ENCODE measurements at regions of chr12 and their contacts with region 1.

Region 1: DNA sequence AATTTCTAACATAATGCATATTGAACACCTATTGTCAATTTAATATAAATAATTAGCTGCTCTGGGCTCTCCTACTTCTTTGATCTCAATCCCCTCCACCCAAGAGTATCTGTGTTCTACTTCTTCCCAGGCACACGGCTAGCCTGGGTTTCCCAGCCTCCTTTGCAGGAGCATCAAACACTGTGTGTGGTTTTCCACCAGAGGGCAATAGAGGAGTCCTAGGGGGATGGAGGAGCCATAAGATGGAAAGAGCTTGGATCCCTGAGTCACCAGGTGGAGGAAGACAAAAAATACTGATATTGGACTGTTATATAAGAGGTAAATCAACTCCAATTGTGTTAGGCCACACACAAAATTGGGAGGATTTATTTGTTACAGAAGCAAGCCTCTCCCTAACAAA is 333.7 kb downstream of the GLT1D1 start:
- DNase-seq: no peak
- ATAC-seq: no peak
- H3K4me3 ChIP-seq: no peak overlapping the region
- H3K27ac ChIP-seq: no peak overlapping the region
- H3K4me1 ChIP-seq: no peaks in the 10 kb centered on the region
- H3K27me3 ChIP-seq: peaks cover 0 to 13% (median 6%) of the 10 kb centered on the region in 7 donors
- CTCF ChIP-seq: no peak

Region 2: DNA sequence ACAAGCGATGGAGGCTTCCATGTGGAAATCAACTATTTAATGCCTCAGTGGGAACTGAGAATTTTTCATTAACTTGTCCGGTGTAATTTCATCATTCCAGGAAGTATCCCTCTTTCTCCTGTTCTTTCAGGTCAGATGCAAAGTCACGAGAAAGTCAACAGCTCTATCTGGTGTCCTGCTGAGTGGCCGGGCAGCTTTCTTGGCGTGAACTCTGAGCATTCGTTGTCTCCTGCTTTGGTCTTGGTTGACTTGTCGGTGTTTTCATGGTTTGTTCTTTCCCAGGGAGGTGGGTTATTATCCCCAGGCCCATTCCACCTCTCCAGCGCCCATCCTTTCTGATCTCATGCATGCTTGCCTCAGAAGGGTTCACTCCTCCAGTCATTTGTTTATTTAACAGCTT is 184.5 kb before region 1 on chr12:
- intact Hi-C with region 1: no loop called
- DNase-seq: no peak
- ATAC-seq: no peak
- H3K4me3 ChIP-seq: no peak overlapping the region
- H3K27ac ChIP-seq: no peak overlapping the region
- H3K4me1 ChIP-seq: no peaks in the 10 kb centered on the region
- H3K27me3 ChIP-seq: peaks cover 0 to 5% (median 0%) of the 10 kb centered on the region in 7 donors
- CTCF ChIP-seq: no peak

Region 3: DNA sequence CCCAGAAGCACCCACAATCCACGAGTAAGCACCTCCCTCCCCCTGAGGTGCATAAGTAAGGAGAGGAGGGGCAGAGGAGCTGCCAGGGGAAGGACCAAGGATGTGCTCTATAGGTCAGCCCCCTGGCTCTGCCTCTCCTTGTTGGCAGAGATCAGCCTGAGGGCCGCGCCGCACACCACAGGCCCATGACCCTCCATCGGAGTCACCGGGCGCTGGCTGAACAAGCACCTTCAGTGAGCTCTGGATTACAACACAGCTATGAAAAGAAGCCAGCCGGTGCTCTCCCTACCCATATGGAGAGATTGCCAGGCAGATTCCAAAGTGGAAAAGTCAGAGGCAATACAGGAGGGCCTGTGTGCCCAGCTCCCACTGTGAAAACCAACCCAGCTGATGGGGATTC is 76.4 kb before region 1 on chr12:
- intact Hi-C with region 1: no loop called
- DNase-seq: no peak
- ATAC-seq: no peak
- H3K4me3 ChIP-seq: no peak overlapping the region
- H3K27ac ChIP-seq: no peak overlapping the region
- H3K4me1 ChIP-seq: no peaks in the 10 kb centered on the region
- H3K27me3 ChIP-seq: peaks cover 0 to 2% (median 0%) of the 10 kb centered on the region in 7 donors
- CTCF ChIP-seq: no peak

Region 4: DNA sequence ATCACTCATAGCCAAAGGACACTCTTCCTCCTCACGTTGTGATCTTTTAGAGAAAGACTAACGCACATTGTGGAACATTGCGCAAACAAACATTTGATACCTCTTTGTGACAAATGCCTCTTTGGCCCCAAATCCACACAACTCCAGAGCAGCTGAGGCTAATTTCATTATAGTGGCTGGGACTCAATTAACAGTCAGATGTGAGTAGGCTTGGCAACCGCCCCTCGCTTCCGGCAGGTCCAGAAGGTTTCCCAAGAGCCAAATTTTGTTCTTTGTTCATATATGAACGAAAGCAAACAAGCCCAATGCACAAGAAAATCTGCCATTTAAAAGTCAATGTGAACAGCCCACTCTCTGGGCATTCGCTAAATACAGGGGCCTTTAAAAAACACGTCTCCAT is 59.7 kb before region 1 on chr12:
- intact Hi-C with region 1: loop called in 1 of 10 experiments (anchors 10 kb)
- DNase-seq: no peak
- ATAC-seq: no peak
- H3K4me3 ChIP-seq: no peak overlapping the region
- H3K27ac ChIP-seq: no peak overlapping the region
- H3K4me1 ChIP-seq: no peaks in the 10 kb centered on the region
- H3K27me3 ChIP-seq: peaks cover 0 to 5% (median 0%) of the 10 kb centered on the region in 7 donors
- CTCF ChIP-seq: no peak